ENCODE measurements at regions of chr5 and their contacts with region 1.

Region 1: DNA sequence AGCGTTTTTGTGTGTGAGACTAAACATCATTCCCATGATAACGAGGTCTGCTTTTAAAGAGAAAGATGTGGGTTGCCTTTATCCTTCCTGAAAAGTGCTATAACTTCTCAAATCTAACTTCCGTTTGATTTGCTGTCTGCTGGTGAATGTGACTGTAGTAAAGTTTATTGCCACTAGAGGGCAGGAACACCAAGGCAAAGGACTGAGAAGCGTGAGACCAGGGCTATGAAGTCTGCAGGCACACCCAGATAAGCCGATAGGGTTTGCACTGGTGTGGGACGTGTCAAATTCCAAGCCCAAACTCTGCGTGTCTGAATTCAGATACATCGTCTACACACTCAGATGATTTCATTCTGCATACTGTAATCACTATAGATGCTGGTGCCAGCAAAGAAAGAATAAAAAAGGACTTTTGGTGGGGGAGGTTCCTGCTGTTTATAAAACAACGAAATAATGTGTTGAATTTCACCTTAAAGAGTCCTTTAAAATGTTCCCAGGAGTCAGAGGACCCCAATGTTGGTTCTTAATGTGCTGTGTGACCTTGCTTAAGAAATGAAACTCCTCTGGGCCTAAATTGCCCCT is 87.2 kb downstream of the PTTG1 start:
- DNase-seq: peak; percentile 10 to 90 (median 59)
- ATAC-seq: peak; percentile 86
- H3K4me3 ChIP-seq: no peak overlapping the region
- H3K4me3 Mint-ChIP-seq: no peak overlapping the region
- H3K27ac ChIP-seq: peak overlapping the region in 1 of 2 experiments; percentile 1
- H3K27ac Mint-ChIP-seq: no peak overlapping the region
- H3K4me1 ChIP-seq: peaks cover 17% of the 10 kb centered on the region
- H3K4me1 Mint-ChIP-seq: peaks cover 26% of the 10 kb centered on the region
- H3K27me3 ChIP-seq: peaks cover 0 to 9% of the 10 kb centered on the region in 2 experiments
- H3K27me3 Mint-ChIP-seq: peaks cover 9% of the 10 kb centered on the region
- CTCF ChIP-seq: peak; percentile 82

Region 2: GRCh38 chr5:159552751-159553150 is 956.1 kb before region 1 on chr5:
- CTCF ChIA-PET with region 1: no interaction called
- POLR2A ChIA-PET with region 1: no interaction called
- intact Hi-C with region 1: no loop called
- DNase-seq: no peak
- ATAC-seq: no peak
- H3K4me3 ChIP-seq: no peak overlapping the region
- H3K4me3 Mint-ChIP-seq: no peak overlapping the region
- H3K27ac ChIP-seq: no peak overlapping the region
- H3K27ac Mint-ChIP-seq: no peak overlapping the region
- H3K4me1 ChIP-seq: no peaks in the 10 kb centered on the region
- H3K4me1 Mint-ChIP-seq: no peaks in the 10 kb centered on the region
- H3K27me3 ChIP-seq: no peaks in the 10 kb centered on the region
- H3K27me3 Mint-ChIP-seq: peaks cover 3% of the 10 kb centered on the region
- CTCF ChIP-seq: no peak

Region 3: GRCh38 chr5:160467555-160468362 is 41.1 kb before region 1 on chr5:
- CTCF ChIA-PET with region 1: interaction called, 3 read pairs
- POLR2A ChIA-PET with region 1: no interaction called
- intact Hi-C with region 1: loop called in 1 of 2 experiments (anchors 5 kb)
- DNase-seq: peak; percentile 41 to 90 (median 76)
- ATAC-seq: peak; percentile 83
- H3K4me3 ChIP-seq: peak overlapping the region; percentile 67 to 70
- H3K4me3 Mint-ChIP-seq: peak overlapping the region; percentile 86
- H3K27ac ChIP-seq: peak overlapping the region; percentile 44 to 77
- H3K27ac Mint-ChIP-seq: peak overlapping the region; percentile 90
- H3K4me1 ChIP-seq: peaks cover 33% of the 10 kb centered on the region
- H3K4me1 Mint-ChIP-seq: peaks cover 62% of the 10 kb centered on the region
- H3K27me3 ChIP-seq: no peaks in the 10 kb centered on the region
- H3K27me3 Mint-ChIP-seq: no peaks in the 10 kb centered on the region
- CTCF ChIP-seq: no peak

Measured in CD8-positive, alpha-beta T cell (primary cell).